ENCODE measurements at regions of chr7 and their contacts with region 1.

Region 1: DNA sequence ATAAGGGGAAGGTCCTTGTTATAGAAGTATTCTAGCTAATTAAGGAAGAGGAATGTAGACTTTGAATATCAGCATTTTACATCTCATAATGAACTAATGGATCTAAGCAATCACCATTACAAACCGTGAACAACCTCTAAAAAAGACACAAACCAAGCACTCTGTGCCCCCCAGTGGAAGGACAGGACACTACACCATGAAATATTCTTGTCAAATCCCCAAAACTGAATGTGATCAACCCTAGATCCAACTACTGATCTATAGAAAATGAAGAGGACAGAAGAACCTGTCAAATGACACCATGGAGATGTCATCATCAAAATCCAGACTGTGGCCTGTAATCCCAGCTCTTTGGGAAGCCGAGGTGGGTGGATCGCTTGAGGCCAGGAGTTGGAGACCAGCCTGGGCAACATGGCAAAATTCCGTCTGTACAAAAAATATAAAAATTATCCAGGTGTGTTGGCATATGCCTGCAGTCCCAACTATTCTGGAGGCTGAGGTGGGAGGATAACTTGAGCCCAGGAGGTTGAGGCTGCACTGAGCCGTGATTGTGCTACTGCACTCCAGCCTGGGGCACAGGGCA is 111.3 kb upstream of the CARD11 start:
- DNase-seq: peak; percentile 31
- H3K4me3 ChIP-seq: no peak overlapping the region
- H3K27ac ChIP-seq: no peak overlapping the region
- H3K4me1 ChIP-seq: no peaks in the 10 kb centered on the region
- H3K27me3 ChIP-seq: peaks cover 6% of the 10 kb centered on the region
- CTCF ChIP-seq: peak; percentile 63 to 78 (median 67)
- EP300 ChIP-seq: no peak
- POLR2A ChIP-seq: no peak

Region 2: GRCh38 chr7:2863461-2864066 is 291.4 kb before region 1 on chr7:
- in situ Hi-C with region 1: loop called in 1 of 4 experiments (anchors 5 kb)
- intact Hi-C with region 1: loop called (anchors 10 kb)
- DNase-seq: peak; percentile 72
- H3K4me3 ChIP-seq: no peak overlapping the region
- H3K27ac ChIP-seq: peak overlapping the region; percentile 67 to 87 (median 78)
- H3K4me1 ChIP-seq: peaks cover 6 to 21% (median 9%) of the 10 kb centered on the region in 4 donors
- H3K27me3 ChIP-seq: no peaks in the 10 kb centered on the region
- CTCF ChIP-seq: no peak
- EP300 ChIP-seq: no peak
- POLR2A ChIP-seq: peak; percentile 31

Region 3: GRCh38 chr7:2870471-2870931 is 284.5 kb before region 1 on chr7:
- in situ Hi-C with region 1: loop called in 2 of 4 experiments (anchors 5 to 10 kb)
- intact Hi-C with region 1: loop called (anchors 10 kb)
- DNase-seq: peak; percentile 61
- H3K4me3 ChIP-seq: no peak overlapping the region
- H3K27ac ChIP-seq: no peak overlapping the region
- H3K4me1 ChIP-seq: peaks cover 0 to 10% (median 0%) of the 10 kb centered on the region in 4 donors
- H3K27me3 ChIP-seq: peaks cover 9% of the 10 kb centered on the region
- CTCF ChIP-seq: no peak
- EP300 ChIP-seq: no peak
- POLR2A ChIP-seq: no peak

Region 4: DNA sequence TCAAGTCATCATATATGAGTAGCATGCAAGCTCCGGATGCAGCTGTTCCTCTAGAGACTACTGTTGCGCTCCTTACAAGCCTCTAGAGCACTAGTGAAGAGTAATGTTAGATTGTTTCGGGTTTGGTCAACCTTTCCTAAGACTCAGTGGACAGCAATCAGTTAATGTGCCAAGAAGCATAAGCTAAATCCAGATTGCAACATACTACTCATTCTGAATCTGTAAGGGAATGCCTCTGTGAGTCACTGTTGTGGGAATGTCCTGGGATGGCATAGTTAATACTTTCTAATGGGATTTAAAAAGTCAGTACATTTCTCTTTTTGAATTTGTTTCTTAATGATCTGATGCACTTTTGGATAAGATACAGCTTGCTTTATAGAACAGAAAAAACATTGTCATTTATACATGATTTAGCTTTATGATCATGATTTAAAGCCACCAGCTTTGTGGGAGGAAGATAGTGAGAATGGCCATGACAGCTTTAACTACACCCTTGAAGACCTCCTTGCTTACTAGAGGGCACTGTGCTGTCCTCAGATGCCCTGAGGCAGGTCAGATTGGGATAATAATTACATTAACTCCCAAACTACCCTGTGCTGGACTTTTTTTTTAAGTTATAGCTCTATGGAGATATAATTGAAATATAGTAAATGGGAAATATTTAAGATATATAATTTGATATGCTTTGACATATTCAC is 284.5 kb after region 1 on chr7:
- in situ Hi-C with region 1: no loop called
- intact Hi-C with region 1: no loop called
- DNase-seq: no peak
- H3K4me3 ChIP-seq: no peak overlapping the region
- H3K27ac ChIP-seq: no peak overlapping the region
- H3K4me1 ChIP-seq: no peaks in the 10 kb centered on the region
- H3K27me3 ChIP-seq: no peaks in the 10 kb centered on the region
- CTCF ChIP-seq: no peak
- EP300 ChIP-seq: no peak
- POLR2A ChIP-seq: no peak

Measured in transverse colon (tissue), 4 donors.